CD8-positive, alpha-beta T cell (primary cell): ENCODE measurements at regions of chr6 and their contacts with region 1.

Region 1: DNA sequence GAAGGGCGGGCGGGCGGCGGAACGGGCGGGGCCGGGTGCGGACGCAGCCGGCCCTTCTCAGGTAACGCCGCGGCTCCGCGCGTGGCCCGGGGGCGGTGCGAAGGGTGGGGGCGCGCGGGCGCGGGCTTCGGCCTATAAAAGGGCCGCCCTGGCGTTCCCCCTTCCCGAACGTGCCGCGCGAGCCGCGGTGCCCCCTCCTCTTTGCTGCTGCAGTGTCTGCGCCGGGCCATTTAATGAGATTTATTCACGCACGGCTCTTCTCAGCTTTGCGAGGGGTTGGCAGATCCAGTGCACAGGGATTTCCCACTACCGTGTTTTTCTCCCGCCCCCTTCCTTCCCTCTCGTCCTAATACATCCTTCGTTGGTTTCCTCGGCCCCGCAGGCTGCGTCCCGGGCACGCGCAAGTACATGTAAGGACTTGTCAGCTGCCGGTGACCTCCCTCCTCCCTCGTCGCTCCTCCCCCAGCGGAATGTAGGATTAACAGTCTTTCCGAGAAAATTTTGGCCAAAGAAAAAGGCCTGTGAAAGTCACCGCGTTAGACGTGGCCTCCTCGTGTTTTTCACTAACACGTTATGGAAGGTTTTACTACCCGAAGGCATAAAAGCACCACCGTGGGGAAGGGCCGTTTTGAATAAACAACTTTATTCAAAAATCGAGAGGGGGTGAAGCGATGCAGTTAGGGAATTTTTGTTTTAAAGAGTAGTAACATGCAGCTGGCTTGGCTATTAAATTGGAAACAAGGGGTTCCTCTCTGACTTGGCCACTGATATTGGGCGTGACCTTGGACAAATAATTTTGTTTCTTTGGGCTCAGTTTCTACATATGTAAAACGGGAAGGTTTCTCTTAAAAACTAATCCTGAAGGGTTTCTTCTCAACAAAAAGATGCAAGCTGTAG is 966 bp upstream of the REV3L start:
- DNase-seq: peak in 6 of 9 experiments; percentile 56 to 93 (median 78)
- ATAC-seq: peak; percentile 24
- H3K4me3 ChIP-seq: peak overlapping the region; percentile 88 to 92
- H3K4me3 Mint-ChIP-seq: peak overlapping the region; percentile 99
- H3K27ac ChIP-seq: peak overlapping the region; percentile 89 to 91
- H3K27ac Mint-ChIP-seq: peak overlapping the region; percentile 99
- H3K4me1 ChIP-seq: peaks cover 12% of the 10 kb centered on the region
- H3K4me1 Mint-ChIP-seq: peaks cover 45% of the 10 kb centered on the region
- H3K27me3 ChIP-seq: no peaks in the 10 kb centered on the region
- H3K27me3 Mint-ChIP-seq: no peaks in the 10 kb centered on the region
- CTCF ChIP-seq: no peak

Region 2: GRCh38 chr6:110981202-110981600 is 502.8 kb before region 1 on chr6:
- CTCF ChIA-PET with region 1: interaction called, 3 read pairs
- POLR2A ChIA-PET with region 1: no interaction called
- intact Hi-C with region 1: loop called in 1 of 2 experiments (anchors 5 kb)
- DNase-seq: peak in 1 of 9 experiments; percentile 49
- ATAC-seq: peak; percentile 1
- H3K4me3 ChIP-seq: peak overlapping the region; percentile 85 to 95
- H3K4me3 Mint-ChIP-seq: peak overlapping the region; percentile 99
- H3K27ac ChIP-seq: peak overlapping the region; percentile 90 to 97
- H3K27ac Mint-ChIP-seq: peak overlapping the region; percentile 100
- H3K4me1 ChIP-seq: peaks cover 6% of the 10 kb centered on the region
- H3K4me1 Mint-ChIP-seq: peaks cover 45% of the 10 kb centered on the region
- H3K27me3 ChIP-seq: no peaks in the 10 kb centered on the region
- H3K27me3 Mint-ChIP-seq: no peaks in the 10 kb centered on the region
- CTCF ChIP-seq: no peak

Region 3: DNA sequence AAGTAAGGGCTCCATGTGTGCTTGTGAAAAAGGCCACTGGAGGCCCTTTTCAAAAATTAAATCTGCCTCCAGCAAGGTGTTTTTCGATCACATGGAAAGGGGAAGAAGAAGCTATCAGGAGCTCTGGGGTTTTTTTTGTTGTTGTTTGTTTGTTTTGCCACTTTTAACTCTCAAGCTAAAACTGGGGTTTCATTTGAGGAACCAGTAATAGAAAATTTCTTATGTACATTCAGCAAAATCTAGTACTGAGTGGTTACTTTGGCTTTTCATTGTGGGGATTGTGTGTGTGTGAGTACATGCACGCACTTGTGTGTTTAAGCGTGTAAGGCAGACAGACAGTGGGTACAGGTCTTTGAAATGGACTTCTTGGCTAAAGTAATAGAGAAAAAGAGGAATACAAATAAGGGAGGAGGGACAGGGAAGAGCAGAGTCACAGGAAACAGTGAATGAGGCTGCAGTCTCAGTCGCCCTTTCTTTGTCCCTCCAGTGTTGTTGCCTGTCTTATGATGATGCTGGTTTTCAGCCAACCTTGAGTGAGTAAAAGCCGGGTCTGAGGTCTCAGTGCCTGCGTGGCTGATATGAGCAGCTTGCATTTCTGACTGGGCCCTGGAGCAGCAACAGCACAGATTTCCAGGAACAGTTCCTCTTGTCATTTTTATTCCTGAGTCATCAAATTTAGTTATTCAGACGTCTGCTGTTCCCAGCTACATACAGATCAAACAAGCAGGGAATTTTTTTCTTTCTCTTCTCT is 370.5 kb before region 1 on chr6:
- CTCF ChIA-PET with region 1: no interaction called
- POLR2A ChIA-PET with region 1: no interaction called
- intact Hi-C with region 1: loop called in 1 of 2 experiments (anchors 5 kb)
- DNase-seq: peak in 4 of 9 experiments; percentile 20 to 47 (median 28)
- ATAC-seq: peak; percentile 53
- H3K4me3 ChIP-seq: peak overlapping the region in 1 of 2 experiments; percentile 1
- H3K4me3 Mint-ChIP-seq: peak overlapping the region; percentile 59
- H3K27ac ChIP-seq: peak overlapping the region; percentile 31 to 65
- H3K27ac Mint-ChIP-seq: peak overlapping the region; percentile 93
- H3K4me1 ChIP-seq: peaks cover 33% of the 10 kb centered on the region
- H3K4me1 Mint-ChIP-seq: peaks cover 49% of the 10 kb centered on the region
- H3K27me3 ChIP-seq: no peaks in the 10 kb centered on the region
- H3K27me3 Mint-ChIP-seq: no peaks in the 10 kb centered on the region
- CTCF ChIP-seq: no peak

Region 4: GRCh38 chr6:111605100-111605751 is 121.2 kb after region 1 on chr6:
- CTCF ChIA-PET with region 1: interaction called, 4 read pairs
- POLR2A ChIA-PET with region 1: interaction called, 6 read pairs
- intact Hi-C with region 1: loop called in 1 of 2 experiments (anchors 5 kb)
- DNase-seq: peak in 6 of 9 experiments; percentile 9 to 51 (median 21)
- ATAC-seq: peak; percentile 58
- H3K4me3 ChIP-seq: peak overlapping the region; percentile 51 to 63
- H3K4me3 Mint-ChIP-seq: peak overlapping the region; percentile 95
- H3K27ac ChIP-seq: peak overlapping the region; percentile 76 to 80
- H3K27ac Mint-ChIP-seq: peak overlapping the region; percentile 95
- H3K4me1 ChIP-seq: peaks cover 22% of the 10 kb centered on the region
- H3K4me1 Mint-ChIP-seq: peaks cover 60% of the 10 kb centered on the region
- H3K27me3 ChIP-seq: no peaks in the 10 kb centered on the region
- H3K27me3 Mint-ChIP-seq: no peaks in the 10 kb centered on the region
- CTCF ChIP-seq: no peak

Region 5: DNA sequence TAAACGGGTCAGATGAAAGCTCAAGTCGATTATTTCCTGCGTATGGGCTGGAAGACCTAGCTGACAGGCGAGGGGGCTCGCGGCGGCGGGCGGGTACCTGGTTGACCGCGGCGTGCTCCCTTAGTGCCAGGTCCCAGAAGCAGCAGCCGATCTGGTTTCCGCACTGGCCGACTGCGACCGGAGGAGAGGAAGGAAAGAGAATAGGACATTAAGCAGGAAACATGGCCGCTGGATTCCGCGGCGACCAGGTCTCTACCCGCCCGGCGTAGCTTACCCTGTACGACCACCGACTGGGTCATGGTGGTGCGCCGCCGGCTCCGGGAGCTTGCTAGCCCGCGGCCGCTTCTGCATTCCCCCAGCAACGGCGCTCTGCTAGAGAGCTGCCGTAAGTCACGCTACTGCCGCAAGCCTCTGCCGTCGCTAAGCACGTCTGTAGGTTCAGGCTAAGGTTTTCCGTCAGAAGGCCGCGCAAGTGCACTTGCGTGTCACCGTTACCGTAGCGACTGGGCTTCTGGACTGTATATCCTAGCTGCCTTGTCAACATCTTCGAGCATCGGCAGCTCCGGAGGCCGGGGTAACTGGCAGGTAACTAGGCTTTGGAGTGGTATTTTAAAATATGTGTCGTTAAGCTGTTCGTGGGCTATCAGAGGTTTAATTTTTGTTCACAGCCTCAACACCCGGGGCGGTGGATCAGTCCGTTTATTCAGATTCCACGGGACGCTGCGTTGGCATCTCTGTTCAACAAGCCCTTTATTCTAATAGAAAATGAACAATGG is 603.3 kb after region 1 on chr6 and contains the starts of genes FAM229B and TUBE1:
- CTCF ChIA-PET with region 1: no interaction called
- POLR2A ChIA-PET with region 1: interaction called, 3 read pairs
- intact Hi-C with region 1: loop called (anchors 1 to 5 kb)
- DNase-seq: peak; percentile 82 to 97 (median 89)
- ATAC-seq: peak; percentile 97
- H3K4me3 ChIP-seq: peak within 1 kb of the TSS; percentile 75 to 80
- H3K4me3 Mint-ChIP-seq: no peak within 1 kb of the TSS
- H3K27ac ChIP-seq: peak within 1 kb of the TSS; percentile 89 to 97
- H3K27ac Mint-ChIP-seq: no peak within 1 kb of the TSS
- H3K4me1 ChIP-seq: peaks cover 9% of the 10 kb centered on the region
- H3K4me1 Mint-ChIP-seq: peaks cover 12% of the 10 kb centered on the region
- H3K27me3 ChIP-seq: no peaks in the 10 kb centered on the region
- H3K27me3 Mint-ChIP-seq: peaks cover 3% of the 10 kb centered on the region
- CTCF ChIP-seq: no peak
- total RNA-seq, gene FAM229B: 3.1 to 3.3 TPM
- total RNA-seq, gene TUBE1: 25.6 to 30.5 TPM